Aorta (tissue), 5 donors: ENCODE measurements at regions of chr12 and their contacts with region 1.

Region 1: GRCh38 chr12:48851883-48852733 is at the start of gene DDX23:
- DNase-seq: peak; percentile 96 to 97
- ATAC-seq: peak; percentile 99
- H3K4me3 ChIP-seq: peak within 1 kb of the TSS; percentile 81 to 83
- H3K27ac ChIP-seq: peak within 1 kb of the TSS in 1 of 2 donors; percentile 82
- H3K4me1 ChIP-seq: no peaks in the 10 kb centered on the region
- H3K27me3 ChIP-seq: no peaks in the 10 kb centered on the region
- total RNA-seq, gene DDX23: 52.2 to 77.2 TPM

Region 2: DNA sequence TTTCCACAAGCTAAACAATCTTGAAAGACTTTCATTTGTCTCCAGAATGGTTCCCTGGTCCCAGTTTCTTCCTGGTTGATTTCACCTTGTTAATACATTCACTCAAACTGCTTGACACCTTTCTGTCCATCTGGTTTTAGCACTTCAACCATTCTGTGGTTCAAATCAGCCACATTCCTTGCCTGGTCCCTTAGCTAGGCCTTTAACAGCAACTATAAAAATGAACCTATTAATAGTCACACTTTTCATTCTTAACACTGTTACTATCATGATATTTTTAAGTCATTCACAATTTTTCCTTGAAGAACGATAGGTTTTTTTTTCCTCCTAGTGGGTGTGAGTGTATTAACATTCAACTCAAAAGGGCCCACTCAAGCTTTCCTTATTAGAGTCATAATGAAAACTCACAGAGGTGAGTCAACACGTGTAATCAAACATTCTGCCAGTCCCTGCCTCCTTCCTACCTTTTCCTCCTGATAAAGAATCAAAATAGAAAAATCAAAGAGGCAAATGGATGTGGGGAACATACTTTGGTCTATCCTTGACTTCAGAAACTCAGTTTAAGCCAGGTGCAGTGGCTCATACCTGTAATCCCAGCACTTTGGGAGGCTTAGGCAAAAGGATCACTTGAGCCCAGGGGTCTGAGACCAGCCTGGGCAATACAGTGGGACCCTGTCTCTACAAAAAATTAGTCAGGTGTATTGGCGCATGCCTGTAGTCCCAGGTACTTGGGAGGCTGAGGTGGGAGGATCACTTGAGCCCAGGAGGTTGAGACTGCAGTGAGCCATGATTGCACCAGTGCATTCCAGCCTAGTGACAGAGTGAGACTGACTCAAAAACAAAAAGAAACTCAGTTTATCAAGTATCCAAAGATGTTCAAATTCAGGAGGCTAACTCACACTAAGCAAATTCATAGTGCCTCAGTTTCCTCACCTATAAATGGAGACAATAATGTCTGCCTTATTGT is 101.1 kb before region 1 on chr12:
- intact Hi-C with region 1: no loop called
- DNase-seq: no peak
- ATAC-seq: no peak
- H3K4me3 ChIP-seq: no peak overlapping the region
- H3K27ac ChIP-seq: no peak overlapping the region
- H3K4me1 ChIP-seq: no peaks in the 10 kb centered on the region
- H3K27me3 ChIP-seq: no peaks in the 10 kb centered on the region

Region 3: GRCh38 chr12:48890657-48891418 is 38.7 kb after region 1 on chr12:
- intact Hi-C with region 1: loop called (anchors 1 to 2 kb)
- DNase-seq: peak; percentile 85 to 95
- ATAC-seq: peak; percentile 95
- H3K4me3 ChIP-seq: peak overlapping the region in 1 of 2 donors; percentile 12
- H3K27ac ChIP-seq: no peak overlapping the region
- H3K4me1 ChIP-seq: no peaks in the 10 kb centered on the region
- H3K27me3 ChIP-seq: no peaks in the 10 kb centered on the region

Region 4: GRCh38 chr12:48903982-48904411 is 51.9 kb after region 1 on chr12:
- intact Hi-C with region 1: no loop called
- DNase-seq: peak; percentile 90 to 94
- ATAC-seq: peak; percentile 90
- H3K4me3 ChIP-seq: no peak overlapping the region
- H3K27ac ChIP-seq: no peak overlapping the region
- H3K4me1 ChIP-seq: no peaks in the 10 kb centered on the region
- H3K27me3 ChIP-seq: no peaks in the 10 kb centered on the region

Region 5: GRCh38 chr12:48936379-48936979 is 84.4 kb after region 1 on chr12:
- intact Hi-C with region 1: loop called (anchors 2 kb)
- DNase-seq: peak; percentile 80 to 92
- ATAC-seq: peak; percentile 84
- H3K4me3 ChIP-seq: no peak overlapping the region
- H3K27ac ChIP-seq: no peak overlapping the region
- H3K4me1 ChIP-seq: no peaks in the 10 kb centered on the region
- H3K27me3 ChIP-seq: no peaks in the 10 kb centered on the region

Region 6: GRCh38 chr12:48988030-48988649 is 136.0 kb after region 1 on chr12:
- intact Hi-C with region 1: loop called (anchors 5 to 10 kb)
- DNase-seq: peak; percentile 77 to 93
- ATAC-seq: peak; percentile 73
- H3K4me3 ChIP-seq: no peak overlapping the region
- H3K27ac ChIP-seq: no peak overlapping the region
- H3K4me1 ChIP-seq: no peaks in the 10 kb centered on the region
- H3K27me3 ChIP-seq: no peaks in the 10 kb centered on the region

Region 7: DNA sequence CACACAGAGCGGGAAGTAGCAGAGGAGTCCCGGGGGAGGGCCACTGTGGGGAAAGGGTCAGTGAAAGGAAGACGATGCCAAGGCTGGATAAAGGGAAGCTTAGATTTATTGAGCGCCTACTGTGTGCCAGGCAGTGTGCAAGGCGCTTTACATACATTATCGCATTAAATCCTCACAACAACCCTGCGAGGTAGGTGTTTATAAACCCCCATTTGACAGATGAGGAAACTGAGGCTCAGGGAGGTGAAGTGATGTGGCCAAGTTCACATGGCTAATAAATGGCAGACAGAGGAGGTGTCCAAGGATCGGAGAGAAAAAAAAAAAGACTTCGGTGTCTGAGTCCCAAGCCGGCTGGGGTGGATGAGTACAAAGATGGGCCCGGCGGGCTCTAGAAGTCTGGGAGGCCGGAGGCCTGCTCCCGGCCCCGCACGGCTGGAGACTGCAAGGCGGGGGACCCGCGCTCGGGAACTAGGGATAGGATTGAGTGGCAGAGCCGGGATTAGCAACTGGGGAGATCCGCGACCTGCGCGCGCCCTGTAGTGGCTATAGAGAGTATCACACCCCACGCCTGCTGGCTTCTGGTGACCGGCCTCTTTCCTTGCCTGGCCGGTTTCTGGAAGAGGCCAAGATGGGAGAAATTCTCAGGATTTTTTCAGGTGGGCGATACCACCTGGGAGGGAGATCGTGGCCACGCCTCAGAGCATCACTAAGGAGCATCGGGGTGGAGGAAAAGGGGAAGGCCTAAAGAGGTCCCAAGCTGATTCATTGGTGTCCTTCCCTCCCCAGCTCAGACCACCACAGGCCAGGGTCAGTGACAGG is 143.2 kb after region 1 on chr12:
- intact Hi-C with region 1: loop called in 1 of 2 experiments (anchors 10 kb)
- DNase-seq: peak; percentile 88 to 92
- ATAC-seq: peak; percentile 90
- H3K4me3 ChIP-seq: no peak overlapping the region
- H3K27ac ChIP-seq: no peak overlapping the region
- H3K4me1 ChIP-seq: no peaks in the 10 kb centered on the region
- H3K27me3 ChIP-seq: no peaks in the 10 kb centered on the region